ENCODE measurements at regions of chr2 and their contacts with region 1.

Region 1: DNA sequence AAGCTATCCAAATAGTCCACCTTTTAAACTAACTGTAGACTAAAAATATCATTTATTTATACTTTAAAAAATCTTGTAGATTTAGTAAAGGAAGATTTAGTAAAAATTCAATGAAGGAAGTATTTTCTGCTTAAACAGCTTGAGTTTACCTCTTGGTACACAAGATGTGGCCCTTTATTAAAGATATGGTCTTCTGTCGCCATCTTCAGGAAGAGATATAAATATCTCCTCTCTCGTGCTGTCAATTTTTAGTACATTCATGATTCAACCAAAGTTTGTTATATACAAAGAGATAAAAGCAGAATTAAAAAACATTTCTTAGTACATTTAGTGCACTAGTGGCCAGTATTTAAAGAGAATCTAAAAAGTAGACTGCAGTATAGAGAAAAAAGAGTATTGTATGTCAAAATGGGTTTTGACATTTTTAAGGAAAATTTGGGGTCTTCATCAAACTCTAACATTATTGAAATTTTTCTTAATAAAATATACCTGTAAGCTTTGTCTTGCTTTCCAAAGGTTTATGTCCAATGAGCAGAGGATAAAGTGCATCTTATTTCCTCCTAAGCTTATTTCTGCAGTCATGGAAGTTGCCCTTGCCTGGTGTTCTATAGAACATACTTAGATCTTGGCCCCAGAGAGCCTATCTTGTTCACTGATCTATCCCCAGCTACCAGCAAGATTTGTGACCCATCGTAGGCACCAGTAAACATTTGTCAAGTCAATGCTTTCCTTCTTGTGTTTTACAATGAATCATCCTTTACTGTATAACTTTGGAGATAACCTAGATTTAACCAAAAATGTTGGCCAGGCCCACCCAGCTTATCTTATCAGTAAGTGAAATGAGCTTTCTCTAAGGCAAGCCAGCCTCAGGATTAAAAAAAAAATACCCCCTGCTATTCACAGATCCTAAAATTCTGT is 18.5 kb upstream of the EML6 start:
- DNase-seq: no peak
- ATAC-seq: peak; percentile 57 to 69
- H3K4me3 ChIP-seq: no peak overlapping the region
- H3K27ac ChIP-seq: no peak overlapping the region
- H3K4me1 ChIP-seq: no peaks in the 10 kb centered on the region
- H3K27me3 ChIP-seq: no peaks in the 10 kb centered on the region

Region 2: GRCh38 chr2:54106631-54107454 is 598.1 kb before region 1 on chr2:
- intact Hi-C with region 1: loop called in 2 of 4 experiments (anchors 10 kb)
- DNase-seq: no peak
- ATAC-seq: peak; percentile 72 to 74
- H3K4me3 ChIP-seq: no peak overlapping the region
- H3K27ac ChIP-seq: no peak overlapping the region
- H3K4me1 ChIP-seq: peaks cover 3% of the 10 kb centered on the region
- H3K27me3 ChIP-seq: no peaks in the 10 kb centered on the region

Region 3: DNA sequence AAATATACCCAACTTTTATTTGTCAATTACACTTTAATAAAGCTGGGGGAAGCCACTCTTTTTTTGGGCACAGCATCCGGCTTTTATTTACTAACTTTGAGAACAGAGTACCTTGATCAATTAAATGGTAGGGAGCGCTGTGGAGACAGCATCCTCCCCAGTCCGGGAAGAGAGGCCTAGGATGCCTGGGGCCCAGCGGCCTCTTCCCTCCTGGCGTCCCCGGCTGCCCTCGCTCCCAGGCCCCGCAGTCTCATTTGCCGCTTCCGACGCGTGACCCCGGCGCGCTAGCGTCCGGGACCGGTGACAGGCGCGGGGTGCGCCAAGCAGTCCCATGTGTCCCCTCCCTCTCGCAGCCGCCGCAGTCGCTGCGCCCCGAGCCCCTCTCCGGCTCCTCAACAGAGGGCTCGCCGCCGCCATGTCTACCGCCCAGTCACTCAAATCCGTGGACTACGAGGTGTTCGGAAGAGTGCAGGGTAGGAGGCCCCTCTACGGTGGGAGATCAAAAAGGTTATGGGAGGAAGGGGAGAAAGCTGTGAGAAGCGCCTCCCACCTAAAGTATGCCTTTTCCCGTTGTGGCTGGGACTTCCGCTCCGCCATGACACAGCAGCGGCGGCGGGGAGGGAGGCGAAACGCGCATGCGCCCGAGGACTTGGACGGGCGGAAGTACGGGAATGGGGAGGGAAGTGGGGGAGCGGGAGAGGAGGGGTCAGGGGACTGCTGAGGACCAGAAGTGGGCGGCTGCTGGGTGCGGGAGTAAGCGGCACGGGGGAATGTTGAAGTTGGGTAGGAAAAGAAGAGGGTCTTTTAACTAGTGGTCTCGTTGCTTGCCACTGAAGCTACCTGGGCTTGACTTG is 589.4 kb before region 1 on chr2 and contains the start of gene ACYP2:
- intact Hi-C with region 1: loop called in 1 of 4 experiments (anchors 10 kb)
- DNase-seq: peak; percentile 98 to 99 (median 99)
- ATAC-seq: peak; percentile 99
- H3K4me3 ChIP-seq: peak within 1 kb of the TSS; percentile 86
- H3K27ac ChIP-seq: peak within 1 kb of the TSS; percentile 100
- H3K4me1 ChIP-seq: no peaks in the 10 kb centered on the region
- H3K27me3 ChIP-seq: no peaks in the 10 kb centered on the region
- total RNA-seq, gene ACYP2: 47.1 to 70.2 (median 60.0) TPM

Region 4: GRCh38 chr2:54161660-54162424 is 543.1 kb before region 1 on chr2:
- intact Hi-C with region 1: loop called in 1 of 4 experiments (anchors 10 kb)
- DNase-seq: no peak
- ATAC-seq: no peak
- H3K4me3 ChIP-seq: no peak overlapping the region
- H3K27ac ChIP-seq: no peak overlapping the region
- H3K4me1 ChIP-seq: no peaks in the 10 kb centered on the region
- H3K27me3 ChIP-seq: no peaks in the 10 kb centered on the region

Region 5: DNA sequence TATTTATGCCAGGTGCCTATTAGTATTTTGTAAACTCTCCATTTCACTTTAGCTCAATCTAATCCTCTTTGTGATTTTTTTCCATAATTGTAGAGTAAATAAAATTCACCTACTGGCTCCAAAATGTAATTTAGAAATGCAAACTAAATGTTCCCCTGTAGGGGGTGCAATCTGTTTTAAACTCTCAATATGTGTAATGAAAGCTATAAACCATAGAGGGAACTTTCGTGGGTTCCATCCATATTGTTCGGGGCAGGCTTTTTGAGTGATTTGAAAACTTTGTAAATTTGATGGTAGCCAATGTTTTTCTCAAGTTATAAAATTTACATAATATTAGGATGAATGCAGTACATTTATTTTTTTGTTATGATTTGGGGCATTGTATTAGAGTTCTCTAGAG is 498.4 kb before region 1 on chr2:
- intact Hi-C with region 1: loop called in 1 of 4 experiments (anchors 10 kb)
- DNase-seq: no peak
- ATAC-seq: peak in 1 of 2 donors; percentile 48
- H3K4me3 ChIP-seq: no peak overlapping the region
- H3K27ac ChIP-seq: no peak overlapping the region
- H3K4me1 ChIP-seq: peaks cover 4% of the 10 kb centered on the region
- H3K27me3 ChIP-seq: no peaks in the 10 kb centered on the region

Region 6: GRCh38 chr2:54522624-54523281 is 182.2 kb before region 1 on chr2:
- intact Hi-C with region 1: loop called in 1 of 4 experiments (anchors 10 kb)
- DNase-seq: no peak
- ATAC-seq: peak in 1 of 2 donors; percentile 51
- H3K4me3 ChIP-seq: no peak overlapping the region
- H3K27ac ChIP-seq: no peak overlapping the region
- H3K4me1 ChIP-seq: peaks cover 24% of the 10 kb centered on the region
- H3K27me3 ChIP-seq: no peaks in the 10 kb centered on the region